Mammary epithelial cell (primary cell): ENCODE measurements at regions of chr18 and their contacts with region 1.

Region 1: DNA sequence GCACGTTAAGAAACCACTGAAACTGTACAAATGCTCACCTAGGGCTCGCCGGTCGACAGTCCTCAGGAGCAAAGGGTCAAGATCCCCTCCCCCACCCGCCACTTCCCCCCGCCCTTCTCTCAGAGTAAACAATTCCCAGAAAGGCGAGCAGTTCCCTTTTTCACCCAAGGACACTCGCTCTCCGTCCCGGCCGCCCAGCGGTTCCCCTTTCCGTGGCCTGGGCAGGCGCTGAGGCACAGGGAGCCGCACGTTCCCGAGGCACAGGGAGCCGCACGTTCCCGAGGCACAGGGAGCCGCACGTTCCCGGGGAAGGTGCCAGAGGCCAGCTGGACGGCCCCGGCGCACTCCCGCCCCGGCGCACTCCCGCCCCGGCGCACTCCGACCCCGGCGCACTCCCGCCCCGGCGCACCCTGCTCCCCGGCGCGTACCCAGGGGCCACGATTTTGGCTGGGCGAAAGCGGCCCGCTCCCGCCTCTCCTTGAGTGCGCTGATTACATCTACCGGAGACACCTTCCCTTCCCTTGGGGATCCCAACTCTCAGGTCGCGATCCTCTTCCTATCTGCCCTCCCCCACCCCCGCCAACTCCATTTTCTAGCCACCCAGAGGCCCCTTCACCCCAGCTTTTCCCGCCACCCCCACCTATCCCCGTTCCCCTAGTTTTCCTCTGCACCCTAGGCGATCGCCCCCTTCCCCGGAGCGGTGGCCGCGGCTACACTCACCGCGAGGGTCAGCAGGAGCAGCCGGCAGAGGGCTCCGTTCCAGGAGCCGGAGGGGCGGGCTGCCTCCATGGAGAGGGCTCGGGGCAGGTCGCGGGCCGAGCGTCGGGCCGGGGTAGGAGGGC is 817 bp downstream of the DSC2 start:
- DNase-seq: peak; percentile 56
- H3K4me3 ChIP-seq: peak overlapping the region; percentile 65 to 82 (median 82)
- H3K27ac ChIP-seq: peak overlapping the region; percentile 71
- H3K4me1 ChIP-seq: peaks cover 38% of the 10 kb centered on the region
- H3K27me3 ChIP-seq: no peaks in the 10 kb centered on the region
- CTCF ChIP-seq: peak in 1 of 2 donors; percentile 33

Region 2: DNA sequence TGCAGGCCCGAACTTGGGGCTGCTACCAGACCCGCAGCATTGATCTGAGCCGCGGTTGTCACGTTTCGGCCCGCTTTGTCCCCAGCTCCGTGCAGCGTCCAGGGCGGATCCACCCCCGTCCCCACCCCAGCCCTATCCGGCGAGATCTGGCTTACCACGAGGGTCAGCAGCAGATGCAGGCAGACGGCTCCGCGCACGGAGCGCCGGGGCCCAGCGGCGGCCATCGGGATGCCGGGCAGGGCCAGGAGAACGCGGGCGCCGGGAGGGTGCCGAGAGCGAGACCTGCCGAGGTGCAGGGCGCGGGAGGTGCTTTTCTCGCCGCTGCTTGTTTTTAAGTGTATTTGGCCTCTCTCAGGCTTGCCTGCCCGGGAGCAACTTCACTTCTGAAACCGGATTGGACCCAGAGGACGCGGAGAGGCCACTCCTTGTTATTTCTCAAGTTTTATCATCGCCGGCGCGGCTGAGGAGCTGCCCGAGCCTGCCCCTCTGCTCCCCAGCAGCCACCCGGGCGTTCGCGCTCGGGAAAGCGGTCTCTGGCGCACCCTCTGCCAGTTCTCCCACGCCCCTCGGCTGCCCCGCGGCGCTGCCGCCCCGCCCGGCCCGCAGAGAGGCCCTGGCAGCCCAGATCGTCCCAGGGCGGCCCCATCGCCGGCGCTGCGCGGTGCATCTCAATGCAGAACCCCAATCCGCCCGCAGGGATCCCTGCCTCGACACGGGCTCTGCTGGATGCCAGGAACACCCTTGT is 58.8 kb before region 1 on chr18 and contains the start of gene DSC3:
- CTCF ChIA-PET with region 1: no interaction called
- dilution Hi-C with region 1: no loop called
- in situ Hi-C with region 1: no loop called
- intact Hi-C with region 1: loop called (anchors 1 kb)
- DNase-seq: peak; percentile 97
- H3K4me3 ChIP-seq: peak within 1 kb of the TSS; percentile 55 to 86 (median 61)
- H3K27ac ChIP-seq: peak within 1 kb of the TSS; percentile 88
- H3K4me1 ChIP-seq: peaks cover 41% of the 10 kb centered on the region
- H3K27me3 ChIP-seq: no peaks in the 10 kb centered on the region
- CTCF ChIP-seq: peak in 1 of 2 donors; percentile 18
- total RNA-seq, gene DSC3: 125 to 272 TPM

Region 3: DNA sequence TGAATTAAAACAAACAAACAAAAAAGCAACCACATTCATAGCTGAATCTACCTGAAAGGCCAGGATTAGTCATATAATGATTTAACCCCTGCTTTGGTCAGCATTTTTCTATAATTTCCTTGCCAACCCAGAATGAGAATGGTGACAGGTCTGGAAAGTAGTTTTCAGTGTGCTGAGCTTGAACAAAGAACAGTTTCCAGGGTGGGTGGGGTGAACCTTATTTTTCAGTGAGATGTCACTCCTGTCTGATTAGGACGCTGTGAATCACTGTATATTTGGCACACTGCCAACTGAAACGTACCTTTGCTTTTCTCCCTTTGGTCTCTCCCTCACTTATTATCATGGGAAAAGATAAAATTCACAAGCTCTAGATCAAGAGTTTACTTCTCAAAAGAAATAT is 96.3 kb after region 1 on chr18:
- CTCF ChIA-PET with region 1: no interaction called
- dilution Hi-C with region 1: no loop called
- in situ Hi-C with region 1: no loop called
- intact Hi-C with region 1: loop called (anchors 2 kb)
- DNase-seq: peak; percentile 92
- H3K4me3 ChIP-seq: no peak overlapping the region
- H3K27ac ChIP-seq: peak overlapping the region; percentile 36
- H3K4me1 ChIP-seq: peaks cover 21% of the 10 kb centered on the region
- H3K27me3 ChIP-seq: no peaks in the 10 kb centered on the region
- CTCF ChIP-seq: no peak

Region 4: DNA sequence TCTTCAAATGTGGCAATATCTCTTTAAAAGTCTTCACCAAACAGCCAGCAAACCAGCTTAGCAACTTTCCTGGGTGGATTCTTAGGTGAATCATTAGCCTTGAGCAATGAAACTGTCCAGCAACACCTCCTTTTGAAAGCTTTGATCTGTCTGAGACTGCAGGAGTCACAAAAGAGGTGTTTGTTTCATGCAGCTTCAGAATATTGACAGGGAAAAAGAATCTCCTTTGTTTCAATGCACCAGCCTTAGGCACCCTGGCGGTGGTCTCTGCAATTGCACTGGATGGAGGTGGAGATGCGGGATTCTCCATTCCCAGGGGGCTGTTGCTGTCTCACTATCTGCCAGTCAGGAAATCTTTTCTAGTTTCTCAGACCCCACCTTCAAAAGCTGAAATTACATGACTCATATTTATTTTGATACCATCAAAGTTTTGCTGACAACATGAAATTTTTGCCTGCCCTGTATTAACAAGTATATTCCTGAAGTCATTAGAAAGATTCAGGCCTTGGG is 140.6 kb after region 1 on chr18:
- CTCF ChIA-PET with region 1: no interaction called
- dilution Hi-C with region 1: no loop called
- in situ Hi-C with region 1: loop called in 1 of 2 experiments (anchors 10 kb)
- intact Hi-C with region 1: loop called (anchors 1 kb)
- DNase-seq: peak; percentile 99
- H3K4me3 ChIP-seq: peak overlapping the region in 1 of 3 experiments; percentile 22
- H3K27ac ChIP-seq: peak overlapping the region; percentile 94
- H3K4me1 ChIP-seq: peaks cover 56% of the 10 kb centered on the region
- H3K27me3 ChIP-seq: no peaks in the 10 kb centered on the region
- CTCF ChIP-seq: peak; percentile 84 to 85

Region 5: GRCh38 chr18:31247574-31248199 is 146.3 kb after region 1 on chr18:
- CTCF ChIA-PET with region 1: no interaction called
- dilution Hi-C with region 1: no loop called
- in situ Hi-C with region 1: loop called in 1 of 2 experiments (anchors 10 kb)
- intact Hi-C with region 1: loop called (anchors 1 kb)
- DNase-seq: peak; percentile 81
- H3K4me3 ChIP-seq: no peak overlapping the region
- H3K27ac ChIP-seq: peak overlapping the region; percentile 73
- H3K4me1 ChIP-seq: peaks cover 62% of the 10 kb centered on the region
- H3K27me3 ChIP-seq: no peaks in the 10 kb centered on the region
- CTCF ChIP-seq: no peak

Region 6: DNA sequence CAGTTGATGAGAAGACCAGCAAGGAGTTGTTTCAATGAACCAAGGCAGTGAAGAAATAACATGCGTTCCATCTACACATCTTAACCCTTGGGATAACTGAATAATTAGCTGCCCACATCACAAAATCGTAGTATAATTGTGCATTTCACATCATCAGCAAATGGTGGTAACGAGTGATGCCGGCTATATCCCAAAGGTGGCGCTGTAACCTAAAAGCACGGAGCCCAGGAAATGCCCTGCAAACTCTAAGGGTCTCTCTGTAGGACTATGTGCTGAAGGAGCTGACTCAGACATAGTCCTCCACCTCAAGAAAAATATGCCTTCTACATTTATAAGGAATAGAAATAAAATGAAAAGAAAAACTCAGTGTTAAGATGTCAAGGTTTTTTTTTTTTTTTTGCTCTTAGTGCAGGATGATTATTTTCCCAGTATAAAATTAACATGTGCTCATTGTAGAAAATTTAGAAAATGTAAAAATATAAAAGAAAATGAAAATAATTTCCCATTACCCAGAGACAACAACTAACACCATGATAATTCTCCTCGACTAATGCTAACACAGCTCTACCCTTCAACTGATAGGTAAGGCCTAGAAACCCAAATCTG is 323.1 kb after region 1 on chr18:
- CTCF ChIA-PET with region 1: no interaction called
- dilution Hi-C with region 1: no loop called
- in situ Hi-C with region 1: no loop called
- intact Hi-C with region 1: loop called (anchors 10 kb)
- DNase-seq: peak; percentile 31
- H3K4me3 ChIP-seq: no peak overlapping the region
- H3K27ac ChIP-seq: no peak overlapping the region
- H3K4me1 ChIP-seq: peaks cover 25% of the 10 kb centered on the region
- H3K27me3 ChIP-seq: no peaks in the 10 kb centered on the region
- CTCF ChIP-seq: peak; percentile 96 to 99

Region 7: GRCh38 chr18:31512203-31512764 is 410.9 kb after region 1 on chr18:
- CTCF ChIA-PET with region 1: no interaction called
- dilution Hi-C with region 1: no loop called
- in situ Hi-C with region 1: no loop called
- intact Hi-C with region 1: loop called (anchors 5 kb)
- DNase-seq: peak; percentile 91
- H3K4me3 ChIP-seq: no peak overlapping the region
- H3K27ac ChIP-seq: peak overlapping the region; percentile 82
- H3K4me1 ChIP-seq: peaks cover 56% of the 10 kb centered on the region
- H3K27me3 ChIP-seq: no peaks in the 10 kb centered on the region
- CTCF ChIP-seq: no peak